AG04450 (cell line): ENCODE measurements at regions of chr18 and their contacts with region 1.

Region 1: DNA sequence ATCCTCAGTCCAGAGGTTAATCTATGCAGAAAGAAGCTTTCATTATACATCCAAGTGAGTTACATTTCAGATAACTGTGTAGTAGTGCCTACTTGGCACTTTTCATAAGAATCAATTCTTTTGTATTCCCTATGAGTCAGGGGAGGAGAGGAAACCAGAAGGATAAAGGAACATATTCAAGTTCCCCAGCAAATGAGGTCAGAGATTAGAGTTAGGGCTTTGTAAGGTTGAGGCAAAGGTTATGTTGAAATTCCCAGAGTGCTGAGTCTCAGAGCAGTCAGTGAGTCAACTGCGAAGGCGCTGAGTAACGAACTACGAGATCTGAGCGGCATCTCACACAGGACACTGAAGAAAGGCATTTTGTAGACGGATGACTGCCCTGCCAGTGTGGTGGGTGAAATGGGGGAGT is 25.1 kb upstream of the ME2 start:
- DNase-seq: no peak
- H3K4me3 ChIP-seq: no peak overlapping the region
- H3K27ac ChIP-seq: no peak overlapping the region
- H3K27me3 ChIP-seq: no peaks in the 10 kb centered on the region
- CTCF ChIP-seq: no peak

Region 2: GRCh38 chr18:50775222-50775621 is 78.6 kb before region 1 on chr18:
- CTCF ChIA-PET with region 1: no interaction called
- POLR2A ChIA-PET with region 1: no interaction called
- DNase-seq: no peak
- H3K4me3 ChIP-seq: no peak overlapping the region
- H3K27ac ChIP-seq: no peak overlapping the region
- H3K27me3 ChIP-seq: no peaks in the 10 kb centered on the region
- CTCF ChIP-seq: no peak

Region 3: DNA sequence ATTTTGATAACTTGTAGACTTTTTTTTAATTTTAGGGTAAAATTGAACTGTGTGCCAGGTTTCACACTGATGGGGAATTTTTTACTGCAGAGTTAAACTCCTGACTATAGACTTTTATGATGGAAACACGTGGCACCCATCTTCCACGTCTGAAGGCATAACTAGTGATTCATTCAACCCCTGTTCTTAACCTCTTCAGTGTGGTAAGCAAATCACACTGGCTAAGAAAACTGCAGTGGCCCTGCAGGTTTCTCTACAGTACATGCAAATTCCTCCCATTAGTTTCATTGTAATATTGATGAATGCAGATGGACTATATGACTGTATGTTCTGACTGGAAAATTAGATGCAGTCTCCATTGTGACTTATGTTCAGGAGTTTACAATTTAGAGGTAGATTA is 223.3 kb after region 1 on chr18:
- CTCF ChIA-PET with region 1: interaction called, 14 read pairs
- POLR2A ChIA-PET with region 1: no interaction called
- DNase-seq: no peak
- H3K4me3 ChIP-seq: no peak overlapping the region
- H3K27ac ChIP-seq: no peak overlapping the region
- H3K27me3 ChIP-seq: no peaks in the 10 kb centered on the region
- CTCF ChIP-seq: no peak